Activated CD8-positive, alpha-beta T cell treated with anti-CD3 and anti-CD28 coated beads for 36 hours (primary cell): ENCODE measurements at regions of chr7 and their contacts with region 1.

Region 1: GRCh38 chr7:100101016-100101862 is at the starts of genes AP4M1 and MCM7:
- DNase-seq: peak; percentile 99
- ATAC-seq: peak; percentile 91
- H3K4me3 Mint-ChIP-seq: peak within 1 kb of the TSS; percentile 91
- H3K27ac Mint-ChIP-seq: peak within 1 kb of the TSS; percentile 95
- H3K4me1 Mint-ChIP-seq: peaks cover 39% of the 10 kb centered on the region
- H3K27me3 Mint-ChIP-seq: no peaks in the 10 kb centered on the region
- CTCF ChIP-seq: no peak
- total RNA-seq, gene AP4M1: 9.8 to 10.9 TPM
- total RNA-seq, gene MCM7: 456 to 476 TPM

Region 2: GRCh38 chr7:100081535-100082102 is 19.6 kb before region 1 on chr7 and contains the start of gene ZNF3:
- CTCF ChIA-PET with region 1: interaction called, 7 read pairs
- POLR2A ChIA-PET with region 1: interaction called, 19 read pairs
- intact Hi-C with region 1: no loop called
- DNase-seq: peak; percentile 99
- ATAC-seq: peak; percentile 83
- H3K4me3 Mint-ChIP-seq: peak within 1 kb of the TSS; percentile 87
- H3K27ac Mint-ChIP-seq: peak within 1 kb of the TSS; percentile 87
- H3K4me1 Mint-ChIP-seq: peaks cover 21% of the 10 kb centered on the region
- H3K27me3 Mint-ChIP-seq: no peaks in the 10 kb centered on the region
- CTCF ChIP-seq: peak; percentile 96
- total RNA-seq, gene ZNF3: 16.4 to 18.9 TPM

Region 3: GRCh38 chr7:100088621-100089457 is 12.4 kb before region 1 on chr7 and contains the start of gene COPS6:
- CTCF ChIA-PET with region 1: interaction called, 10 read pairs
- POLR2A ChIA-PET with region 1: interaction called, 187 read pairs
- intact Hi-C with region 1: no loop called
- DNase-seq: peak; percentile 88
- ATAC-seq: peak; percentile 72
- H3K4me3 Mint-ChIP-seq: peak within 1 kb of the TSS; percentile 95
- H3K27ac Mint-ChIP-seq: peak within 1 kb of the TSS; percentile 97
- H3K4me1 Mint-ChIP-seq: peaks cover 25% of the 10 kb centered on the region
- H3K27me3 Mint-ChIP-seq: no peaks in the 10 kb centered on the region
- CTCF ChIP-seq: no peak
- total RNA-seq, gene COPS6: 81.3 to 86.3 TPM

Region 4: GRCh38 chr7:100111914-100112313 is 10.7 kb after region 1 on chr7:
- CTCF ChIA-PET with region 1: interaction called, 4 read pairs
- POLR2A ChIA-PET with region 1: interaction called, 59 read pairs
- intact Hi-C with region 1: no loop called
- DNase-seq: no peak
- ATAC-seq: no peak
- H3K4me3 Mint-ChIP-seq: no peak overlapping the region
- H3K27ac Mint-ChIP-seq: no peak overlapping the region
- H3K4me1 Mint-ChIP-seq: no peaks in the 10 kb centered on the region
- H3K27me3 Mint-ChIP-seq: no peaks in the 10 kb centered on the region
- CTCF ChIP-seq: no peak

Region 5: DNA sequence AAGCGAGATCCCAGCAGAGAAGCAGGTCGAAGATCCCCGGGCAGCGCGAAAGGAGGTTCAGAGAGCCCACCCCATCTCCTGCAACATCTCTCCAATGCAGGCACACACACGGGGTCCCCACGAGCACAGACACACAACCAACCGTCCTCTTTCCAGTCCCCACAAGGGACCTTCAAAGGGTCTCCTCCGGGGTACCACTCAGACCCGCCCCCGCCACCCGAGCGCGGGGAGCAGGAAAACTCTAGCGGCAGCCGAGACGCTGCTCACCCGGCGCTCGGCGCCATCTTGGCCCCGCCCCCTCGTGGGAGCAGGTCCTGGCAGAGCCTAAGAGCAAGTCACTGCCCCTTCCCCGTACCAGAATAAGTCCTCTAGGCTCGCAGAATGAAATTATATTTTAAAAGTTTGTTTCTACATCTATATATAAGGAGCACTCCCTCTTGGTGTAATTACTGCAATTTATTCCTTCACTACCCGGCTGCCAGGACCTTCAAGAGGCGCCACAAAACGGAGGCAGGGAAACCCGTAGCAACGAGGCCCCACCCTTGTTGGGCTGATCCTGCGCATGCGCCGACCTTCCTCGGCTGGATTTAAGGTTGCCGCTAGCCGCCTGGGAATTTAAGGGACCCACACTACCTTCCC is 17.9 kb after region 1 on chr7 and contains the starts of genes CNPY4 and TAF6:
- CTCF ChIA-PET with region 1: interaction called, 6 read pairs
- POLR2A ChIA-PET with region 1: interaction called, 59 read pairs
- intact Hi-C with region 1: no loop called
- DNase-seq: peak; percentile 95
- ATAC-seq: peak; percentile 78
- H3K4me3 Mint-ChIP-seq: peak within 1 kb of the TSS; percentile 89
- H3K27ac Mint-ChIP-seq: peak within 1 kb of the TSS; percentile 89
- H3K4me1 Mint-ChIP-seq: peaks cover 18% of the 10 kb centered on the region
- H3K27me3 Mint-ChIP-seq: no peaks in the 10 kb centered on the region
- CTCF ChIP-seq: no peak
- total RNA-seq, gene CNPY4: 9.8 to 10.4 TPM
- total RNA-seq, gene TAF6: 48.6 to 55.3 TPM

Region 6: GRCh38 chr7:100126931-100127865 is 26.0 kb after region 1 on chr7 and contains the start of gene MBLAC1:
- CTCF ChIA-PET with region 1: interaction called, 18 read pairs
- POLR2A ChIA-PET with region 1: interaction called, 43 read pairs
- intact Hi-C with region 1: no loop called
- DNase-seq: peak; percentile 95
- ATAC-seq: peak; percentile 84
- H3K4me3 Mint-ChIP-seq: peak within 1 kb of the TSS; percentile 99
- H3K27ac Mint-ChIP-seq: peak within 1 kb of the TSS; percentile 100
- H3K4me1 Mint-ChIP-seq: peaks cover 24% of the 10 kb centered on the region
- H3K27me3 Mint-ChIP-seq: no peaks in the 10 kb centered on the region
- CTCF ChIP-seq: no peak
- total RNA-seq, gene MBLAC1: 1.9 to 2.1 TPM